ENCODE measurements at regions of chr10 and their contacts with region 1.

Region 1: DNA sequence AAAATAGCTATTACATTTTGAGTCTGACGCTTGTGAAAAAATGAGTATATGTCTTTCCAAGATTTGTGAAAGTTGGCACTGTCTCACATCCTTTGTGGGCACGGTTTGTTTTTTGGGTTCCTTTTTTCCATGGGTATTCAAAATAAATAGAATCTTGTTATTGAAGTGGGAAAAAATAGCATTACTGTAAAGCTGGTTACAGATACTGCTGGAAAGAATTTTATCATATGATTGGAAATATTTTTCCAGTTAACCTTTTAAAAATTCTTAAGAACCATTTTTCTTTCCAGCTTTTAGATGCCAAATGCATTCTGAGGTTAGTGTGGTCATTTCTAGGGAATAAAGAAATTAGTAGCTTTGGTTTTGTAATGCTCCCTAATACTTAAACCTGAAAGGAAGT is 11.4 kb downstream of the NET1 start:
- DNase-seq: no peak
- H3K4me3 ChIP-seq: no peak overlapping the region
- H3K27ac ChIP-seq: no peak overlapping the region
- H3K4me1 ChIP-seq: peaks cover 0 to 4% (median 1%) of the 10 kb centered on the region in 4 experiments; a peak in 3 of 7 replicates
- H3K27me3 ChIP-seq: no peaks in the 10 kb centered on the region
- CTCF ChIP-seq: no peak
- EP300 ChIP-seq: no peak
- POLR2A ChIP-seq: no peak
- RAD21 ChIP-seq: no peak

Region 2: DNA sequence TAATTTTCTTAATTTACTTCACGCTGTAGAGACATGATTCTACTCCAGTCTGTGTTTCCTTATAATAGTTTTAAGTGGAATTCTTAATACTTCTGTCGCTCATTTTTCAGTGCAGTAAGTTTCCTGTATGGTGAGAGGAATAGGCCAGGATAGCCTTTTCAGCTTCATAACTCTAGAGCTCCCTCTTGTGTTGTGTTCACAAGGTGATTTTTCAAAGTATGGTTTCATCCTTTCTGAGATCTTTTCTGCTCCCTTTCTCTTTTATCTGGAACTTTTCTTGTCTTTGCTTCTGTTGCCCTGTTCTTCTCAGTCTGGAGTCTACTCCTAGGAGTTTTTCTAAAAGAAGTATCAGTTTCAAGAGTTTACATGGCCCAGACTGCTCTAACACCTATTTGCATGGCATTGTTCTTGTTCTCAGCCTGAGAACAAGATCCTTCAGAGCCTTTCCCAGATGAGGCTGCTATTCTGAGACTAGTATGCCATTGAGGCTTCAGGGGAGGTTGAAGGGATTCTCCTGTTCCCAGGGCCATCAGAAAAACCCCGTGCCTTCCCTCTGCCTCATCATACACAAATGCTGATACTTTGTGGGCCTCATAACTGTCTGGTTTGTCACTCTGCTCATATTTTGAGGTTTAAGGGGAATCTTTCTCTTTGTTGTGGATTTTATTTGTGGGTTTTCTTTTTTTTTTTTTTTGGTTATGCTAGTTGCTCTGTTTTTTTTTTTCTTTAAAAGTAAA is 10.4 kb after region 1 on chr10:
- CTCF ChIA-PET with region 1: interaction called, 21 read pairs
- POLR2A ChIA-PET with region 1: no interaction called
- DNase-seq: no peak
- H3K4me3 ChIP-seq: no peak overlapping the region
- H3K27ac ChIP-seq: no peak overlapping the region
- H3K4me1 ChIP-seq: peaks cover 0 to 3% (median 0%) of the 10 kb centered on the region in 4 experiments; a peak in 1 of 7 replicates
- H3K27me3 ChIP-seq: no peaks in the 10 kb centered on the region
- CTCF ChIP-seq: peak in 2 of 3 experiments; percentile 51 to 69; a peak in 2 of 4 replicates
- EP300 ChIP-seq: no peak
- POLR2A ChIP-seq: no peak
- RAD21 ChIP-seq: peak; percentile 73 to 75

Region 3: GRCh38 chr10:5502903-5503835 is 79.4 kb after region 1 on chr10:
- CTCF ChIA-PET with region 1: no interaction called
- POLR2A ChIA-PET with region 1: no interaction called
- DNase-seq: no peak
- H3K4me3 ChIP-seq: no peak overlapping the region
- H3K27ac ChIP-seq: no peak overlapping the region
- H3K4me1 ChIP-seq: no peaks in the 10 kb centered on the region
- H3K27me3 ChIP-seq: no peaks in the 10 kb centered on the region
- CTCF ChIP-seq: no peak
- EP300 ChIP-seq: no peak
- POLR2A ChIP-seq: no peak
- RAD21 ChIP-seq: no peak

Region 4: GRCh38 chr10:5971315-5971832 is 547.6 kb after region 1 on chr10:
- CTCF ChIA-PET with region 1: no interaction called
- POLR2A ChIA-PET with region 1: no interaction called
- DNase-seq: peak in 1 of 2 experiments; percentile 8
- H3K4me3 ChIP-seq: no peak overlapping the region
- H3K27ac ChIP-seq: no peak overlapping the region
- H3K4me1 ChIP-seq: no peaks in the 10 kb centered on the region; a peak in 1 of 7 replicates
- H3K27me3 ChIP-seq: peaks cover 3 to 13% (median 12%) of the 10 kb centered on the region in 4 experiments
- CTCF ChIP-seq: no peak
- EP300 ChIP-seq: no peak
- POLR2A ChIP-seq: no peak
- RAD21 ChIP-seq: no peak